Calu3 (cell line): ENCODE measurements at regions of chrX and their contacts with region 1.

Region 1: GRCh38 chrX:54980334-54980733 is 13.7 kb downstream of the PFKFB1 start:
- DNase-seq: no peak
- H3K4me3 Mint-ChIP-seq: no peak overlapping the region
- H3K27ac Mint-ChIP-seq: no peak overlapping the region
- H3K4me1 Mint-ChIP-seq: no peaks in the 10 kb centered on the region
- H3K27me3 Mint-ChIP-seq: no peaks in the 10 kb centered on the region
- CTCF ChIP-seq: no peak

Region 2: DNA sequence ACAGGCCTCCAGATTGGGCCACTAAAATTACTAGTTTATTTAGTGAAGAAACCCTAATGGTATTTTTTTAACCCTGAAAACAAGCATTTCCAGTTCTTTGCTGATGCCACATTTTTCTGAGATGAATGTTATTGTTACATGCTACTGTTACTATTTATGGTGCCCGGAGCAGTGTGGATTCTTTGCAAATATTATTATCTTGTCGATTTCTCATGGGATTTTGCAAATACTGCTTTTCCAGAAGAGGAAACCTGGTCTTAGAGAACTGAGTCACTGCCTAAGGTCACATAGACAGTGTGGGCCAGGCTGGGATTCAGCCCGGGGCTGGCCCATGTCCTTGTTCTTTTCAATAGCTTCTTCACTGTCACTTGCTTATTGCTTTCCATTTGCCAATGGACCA is 59.2 kb after region 1 on chrX:
- CTCF ChIA-PET with region 1: no interaction called
- intact Hi-C with region 1: loop called (anchors 10 kb)
- DNase-seq: no peak
- H3K4me3 Mint-ChIP-seq: no peak overlapping the region
- H3K27ac Mint-ChIP-seq: no peak overlapping the region
- H3K4me1 Mint-ChIP-seq: no peaks in the 10 kb centered on the region
- H3K27me3 Mint-ChIP-seq: no peaks in the 10 kb centered on the region
- CTCF ChIP-seq: no peak